Endothelial cell of umbilical vein (primary cell): ENCODE measurements at regions of chr4 and their contacts with region 1.

Region 1: GRCh38 chr4:123986268-123986798 is 589.7 kb downstream of the SPRY1 start:
- DNase-seq: peak; percentile 99
- H3K4me3 ChIP-seq: no peak overlapping the region
- H3K27ac ChIP-seq: peak overlapping the region; percentile 98
- H3K4me1 ChIP-seq: peaks cover 41% of the 10 kb centered on the region
- H3K27me3 ChIP-seq: no peaks in the 10 kb centered on the region
- CTCF ChIP-seq: no peak
- POLR2A ChIP-seq: no peak

Region 2: GRCh38 chr4:123127218-123127617 is 859.1 kb before region 1 on chr4:
- CTCF ChIA-PET with region 1: no interaction called
- POLR2A ChIA-PET with region 1: no interaction called
- dilution Hi-C with region 1: no loop called
- intact Hi-C with region 1: loop called (anchors 2 kb)
- DNase-seq: peak; percentile 67
- H3K4me3 ChIP-seq: no peak overlapping the region
- H3K27ac ChIP-seq: peak overlapping the region; percentile 65
- H3K4me1 ChIP-seq: peaks cover 19% of the 10 kb centered on the region
- H3K27me3 ChIP-seq: no peaks in the 10 kb centered on the region
- CTCF ChIP-seq: no peak
- POLR2A ChIP-seq: no peak

Region 3: DNA sequence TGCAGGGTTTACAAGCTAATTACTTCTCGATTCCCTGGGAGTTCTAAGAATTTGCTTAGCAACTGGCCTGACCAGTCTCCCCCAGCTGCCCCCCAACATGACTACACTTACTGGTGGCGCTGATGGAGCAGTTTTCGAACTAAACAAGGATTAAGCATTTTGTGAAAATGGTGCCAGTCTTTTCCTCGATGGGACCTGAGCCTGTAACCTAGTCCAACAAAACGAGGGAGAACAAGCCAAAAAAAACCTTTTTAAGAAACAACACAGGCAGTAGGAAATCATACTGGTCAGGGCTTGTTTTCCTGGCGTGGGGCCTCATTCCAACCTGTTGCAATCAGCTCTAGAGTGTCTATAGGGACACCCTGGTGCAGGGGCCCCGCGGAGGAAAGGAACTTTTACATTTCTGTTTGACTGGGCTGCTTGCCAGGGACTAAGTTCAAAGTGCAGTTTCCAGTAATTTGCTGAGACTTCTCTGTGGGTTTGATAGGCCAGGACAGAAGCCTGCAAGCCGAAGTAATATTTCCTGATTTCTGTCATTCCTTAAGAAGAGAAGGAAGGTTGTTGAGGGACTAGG is 431.0 kb before region 1 on chr4:
- CTCF ChIA-PET with region 1: no interaction called
- POLR2A ChIA-PET with region 1: no interaction called
- dilution Hi-C with region 1: no loop called
- intact Hi-C with region 1: loop called (anchors 5 kb)
- DNase-seq: peak; percentile 97
- H3K4me3 ChIP-seq: no peak overlapping the region
- H3K27ac ChIP-seq: no peak overlapping the region
- H3K4me1 ChIP-seq: peaks cover 29% of the 10 kb centered on the region
- H3K27me3 ChIP-seq: peaks cover 32 to 50% of the 10 kb centered on the region in 2 experiments
- CTCF ChIP-seq: no peak
- POLR2A ChIP-seq: no peak

Region 4: GRCh38 chr4:123776254-123776653 is 210.1 kb before region 1 on chr4:
- CTCF ChIA-PET with region 1: interaction called, 3 read pairs
- POLR2A ChIA-PET with region 1: no interaction called
- dilution Hi-C with region 1: no loop called
- intact Hi-C with region 1: loop called (anchors 1 kb)
- DNase-seq: no peak
- H3K4me3 ChIP-seq: no peak overlapping the region
- H3K27ac ChIP-seq: no peak overlapping the region
- H3K4me1 ChIP-seq: peaks cover 11% of the 10 kb centered on the region
- H3K27me3 ChIP-seq: no peaks in the 10 kb centered on the region
- CTCF ChIP-seq: no peak
- POLR2A ChIP-seq: no peak

Region 5: GRCh38 chr4:123939621-123940020 is 46.7 kb before region 1 on chr4:
- CTCF ChIA-PET with region 1: no interaction called
- POLR2A ChIA-PET with region 1: no interaction called
- dilution Hi-C with region 1: no loop called
- intact Hi-C with region 1: loop called (anchors 1 kb)
- DNase-seq: peak; percentile 86
- H3K4me3 ChIP-seq: no peak overlapping the region
- H3K27ac ChIP-seq: peak overlapping the region; percentile 79
- H3K4me1 ChIP-seq: peaks cover 35% of the 10 kb centered on the region
- H3K27me3 ChIP-seq: no peaks in the 10 kb centered on the region
- CTCF ChIP-seq: no peak
- POLR2A ChIP-seq: no peak

Region 6: DNA sequence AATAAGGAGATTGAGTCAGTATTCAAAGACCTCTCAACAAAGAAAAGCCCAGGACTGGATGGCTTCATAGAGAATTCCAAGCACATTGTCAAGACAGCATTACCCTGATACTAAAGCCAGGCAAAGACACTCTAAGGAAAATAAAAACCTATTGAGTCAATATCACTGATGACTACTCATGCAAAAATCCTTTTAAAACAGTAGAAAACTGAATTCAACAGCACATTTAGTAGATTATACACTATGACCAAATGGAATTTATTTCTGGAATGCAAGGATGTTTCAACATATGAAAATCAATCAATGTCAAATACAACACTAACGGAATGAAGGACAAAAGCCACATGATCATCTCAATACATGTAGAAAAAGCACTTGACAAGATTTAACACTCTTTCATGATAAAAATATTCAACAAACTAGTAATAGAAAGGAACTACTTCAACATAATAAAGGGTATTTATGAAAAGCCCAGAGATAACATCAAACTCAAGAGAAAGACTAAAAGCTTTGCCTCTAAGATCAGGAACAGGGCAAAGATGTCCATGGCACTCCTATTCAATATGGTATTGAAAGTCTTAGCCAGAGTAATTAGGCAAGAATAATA is 92.9 kb after region 1 on chr4:
- CTCF ChIA-PET with region 1: no interaction called
- POLR2A ChIA-PET with region 1: no interaction called
- dilution Hi-C with region 1: no loop called
- intact Hi-C with region 1: no loop called
- DNase-seq: no peak
- H3K4me3 ChIP-seq: no peak overlapping the region
- H3K27ac ChIP-seq: no peak overlapping the region
- H3K4me1 ChIP-seq: no peaks in the 10 kb centered on the region
- H3K27me3 ChIP-seq: no peaks in the 10 kb centered on the region
- CTCF ChIP-seq: no peak
- POLR2A ChIP-seq: no peak

Region 7: DNA sequence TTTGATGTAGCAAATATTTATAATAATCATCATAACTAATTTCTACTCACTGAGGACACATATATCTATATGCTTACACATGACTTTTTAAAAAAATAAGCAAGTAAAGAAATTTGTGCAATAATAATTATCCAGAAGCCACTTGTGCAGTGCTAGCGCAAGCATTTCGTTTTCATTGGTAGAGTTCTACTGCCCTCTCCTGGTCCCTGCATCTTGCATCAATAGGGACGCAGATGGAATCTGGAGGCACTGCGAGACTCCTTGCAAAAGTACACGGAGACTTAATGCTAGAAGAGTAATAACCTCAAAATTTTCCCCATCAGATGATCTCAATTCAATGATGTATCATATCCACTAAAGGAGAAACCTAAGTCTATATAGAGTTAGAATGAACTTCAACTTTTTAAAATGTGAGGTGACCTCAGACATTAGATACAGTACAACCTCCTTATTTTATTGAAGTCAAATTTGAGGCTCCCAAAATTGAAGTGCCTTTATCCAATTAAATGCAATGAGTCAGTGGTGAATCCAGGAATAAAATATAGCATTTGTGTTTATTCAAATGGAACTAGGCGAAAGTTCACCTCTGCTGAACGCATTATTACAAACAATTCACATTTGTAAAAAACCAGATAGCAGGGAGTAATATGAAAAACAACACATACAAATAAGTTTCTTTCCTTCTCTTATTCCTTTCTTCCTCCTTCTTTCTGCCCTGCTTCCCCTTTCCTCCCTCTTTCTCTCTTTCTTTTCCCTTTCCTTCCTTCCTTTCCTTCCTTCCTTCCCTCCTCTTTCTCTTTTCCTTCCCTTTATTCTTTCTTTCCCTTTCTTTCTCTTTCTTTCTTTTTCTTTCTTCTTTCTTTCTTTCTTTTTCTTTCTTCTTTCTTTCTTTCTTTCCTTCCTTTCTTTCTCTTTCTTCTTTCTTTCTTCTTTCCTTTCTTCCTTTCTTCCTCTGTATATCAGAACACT is 276.2 kb after region 1 on chr4:
- CTCF ChIA-PET with region 1: no interaction called
- POLR2A ChIA-PET with region 1: no interaction called
- dilution Hi-C with region 1: no loop called
- intact Hi-C with region 1: loop called (anchors 10 kb)
- DNase-seq: peak; percentile 86
- H3K4me3 ChIP-seq: no peak overlapping the region
- H3K27ac ChIP-seq: no peak overlapping the region
- H3K4me1 ChIP-seq: no peaks in the 10 kb centered on the region
- H3K27me3 ChIP-seq: no peaks in the 10 kb centered on the region
- CTCF ChIP-seq: peak; percentile 70 to 87
- POLR2A ChIP-seq: no peak

Region 8: GRCh38 chr4:124980276-124980752 is 994.0 kb after region 1 on chr4:
- CTCF ChIA-PET with region 1: no interaction called
- POLR2A ChIA-PET with region 1: no interaction called
- dilution Hi-C with region 1: no loop called
- intact Hi-C with region 1: no loop called
- DNase-seq: no peak
- H3K4me3 ChIP-seq: no peak overlapping the region
- H3K27ac ChIP-seq: no peak overlapping the region
- H3K4me1 ChIP-seq: no peaks in the 10 kb centered on the region
- H3K27me3 ChIP-seq: no peaks in the 10 kb centered on the region
- CTCF ChIP-seq: no peak
- POLR2A ChIP-seq: no peak